Left ventricle myocardium superior (tissue), 1 donor: ENCODE measurements at regions of chr18 and their contacts with region 1.

Region 1: GRCh38 chr18:48475635-48476549 is 62.9 kb upstream of the CTIF start:
- DNase-seq: no peak
- ATAC-seq: peak; percentile 91

Region 2: DNA sequence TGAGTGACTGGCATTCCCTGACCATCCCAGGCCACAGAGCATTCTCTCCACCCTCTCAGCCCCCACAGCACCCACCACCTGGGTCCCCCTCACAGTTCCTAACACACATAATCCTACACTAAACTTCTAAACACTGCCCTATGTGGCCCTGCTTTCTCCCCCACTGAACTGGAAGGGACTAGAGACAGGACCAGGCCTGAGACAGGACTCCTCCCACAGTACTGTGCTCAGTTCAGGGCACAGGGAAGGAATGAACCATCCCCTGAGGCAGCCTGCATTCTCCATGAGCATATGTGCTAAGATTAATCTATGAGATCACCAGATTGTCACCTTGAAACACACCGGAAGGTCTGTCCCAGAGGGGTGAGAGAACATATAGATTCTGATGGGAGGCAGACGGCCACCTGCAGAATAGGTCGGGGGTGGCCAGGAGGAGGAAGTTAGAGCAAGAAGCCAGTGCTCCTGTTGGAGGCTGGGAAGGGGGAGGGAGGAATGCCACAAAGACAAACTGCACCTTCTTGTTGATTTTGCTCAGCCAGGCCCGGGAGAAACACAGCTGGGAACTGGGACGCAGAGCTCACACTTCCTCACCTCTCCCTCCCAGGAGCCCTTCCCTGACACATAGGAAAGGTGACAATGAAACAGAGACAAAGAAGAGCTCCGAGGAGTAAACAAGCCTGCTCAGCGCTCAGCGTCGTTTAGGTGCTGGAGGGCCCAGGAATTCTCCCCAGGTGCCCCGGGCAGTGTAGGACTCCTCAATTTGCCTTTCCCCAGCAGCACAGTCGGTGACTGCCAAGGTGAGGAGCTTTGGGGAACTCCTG is 118.9 kb before region 1 on chr18:
- intact Hi-C with region 1: no loop called
- DNase-seq: no peak
- ATAC-seq: no peak

Region 3: GRCh38 chr18:48430150-48430549 is 45.7 kb before region 1 on chr18:
- intact Hi-C with region 1: no loop called
- DNase-seq: no peak
- ATAC-seq: no peak

Region 4: DNA sequence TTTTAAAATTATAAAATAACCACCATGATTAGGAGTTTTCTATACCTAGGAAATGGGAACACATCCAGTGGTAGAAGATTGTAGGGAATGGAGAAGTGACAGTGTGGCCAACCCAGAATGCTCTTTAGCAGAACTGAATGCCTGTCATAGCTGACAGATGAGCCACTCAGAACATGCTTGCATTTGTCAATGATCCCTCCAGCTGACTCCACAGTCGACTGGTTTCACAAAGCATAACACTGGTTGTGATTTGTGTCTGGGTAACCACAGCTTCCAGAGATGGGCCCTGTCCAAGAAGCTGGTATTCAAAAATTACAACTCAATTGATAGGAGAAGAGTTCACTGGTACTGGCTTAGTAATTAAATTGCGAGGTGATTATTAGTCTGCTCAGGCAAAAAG is 53.9 kb after region 1 on chr18:
- intact Hi-C with region 1: no loop called
- DNase-seq: no peak
- ATAC-seq: peak; percentile 91

Region 5: DNA sequence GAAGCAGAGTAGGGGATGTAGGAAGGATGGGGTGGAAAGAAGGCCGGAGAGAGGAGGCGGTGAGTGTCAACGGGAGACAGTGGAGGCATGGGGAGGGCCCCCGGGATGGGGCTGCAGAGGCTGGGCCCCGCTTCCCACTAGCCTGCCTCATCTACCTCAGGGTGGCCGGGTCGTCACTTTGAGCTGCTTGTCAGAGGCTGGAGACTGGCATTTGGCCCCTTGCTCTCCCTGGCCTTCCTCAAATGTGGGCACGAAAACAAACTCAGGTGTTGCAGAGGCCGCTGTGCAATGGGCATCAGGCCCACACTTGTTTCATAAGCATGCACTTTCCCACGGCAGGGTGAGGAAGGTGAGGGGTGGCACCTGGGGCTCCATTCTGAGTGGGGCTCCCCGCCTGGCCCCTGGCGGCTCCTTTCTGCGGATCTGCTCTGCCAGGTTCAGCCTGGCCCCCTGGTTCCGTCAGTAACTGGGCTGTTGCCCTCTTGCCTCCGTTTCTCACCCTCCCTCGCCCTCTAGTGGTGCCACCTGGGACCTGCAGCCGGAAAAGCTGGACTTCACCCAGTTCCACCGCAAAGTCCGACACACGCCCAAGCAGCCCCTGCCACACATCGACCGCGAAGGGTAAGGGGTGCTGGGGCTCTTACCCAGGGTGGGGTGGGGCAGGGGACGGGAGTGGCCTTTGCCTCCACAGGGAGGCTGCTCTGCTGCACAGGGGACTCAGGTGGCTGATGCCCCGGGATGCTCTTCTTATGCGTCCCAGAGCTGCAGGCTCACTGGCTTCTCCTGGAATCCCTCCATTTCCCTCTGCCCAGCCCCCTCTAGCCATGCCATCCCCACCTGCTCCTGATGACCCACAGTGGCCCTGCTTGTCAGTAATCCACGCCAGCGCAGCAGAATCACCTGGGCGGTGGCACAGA is 188.3 kb after region 1 on chr18:
- intact Hi-C with region 1: loop called (anchors 5 kb)
- DNase-seq: peak; percentile 80
- ATAC-seq: peak; percentile 70